Heart left ventricle (tissue), 16 donors: ENCODE measurements at regions of chr3 and their contacts with region 1.

Region 1: GRCh38 chr3:113211330-113212149 is at the start of gene BOC:
- DNase-seq: peak in 4 of 5 donors; percentile 41 to 49 (median 44)
- ATAC-seq: peak; percentile 68 to 89 (median 82)
- H3K4me3 ChIP-seq: peak within 1 kb of the TSS; percentile 49 to 93 (median 72)
- H3K27ac ChIP-seq: peak within 1 kb of the TSS; percentile 74 to 97 (median 86)
- H3K4me1 ChIP-seq: peaks cover 0 to 18% (median 0%) of the 10 kb centered on the region in 12 donors
- H3K27me3 ChIP-seq: peaks cover 0 to 42% (median 6%) of the 10 kb centered on the region in 9 donors
- CTCF ChIP-seq: no peak
- POLR2A ChIP-seq: peak in 1 of 2 donors; percentile 40
- total RNA-seq, gene BOC: 3.1 to 12.2 (median 6.0) TPM

Region 2: GRCh38 chr3:113151461-113152031 is 60.0 kb before region 1 on chr3:
- intact Hi-C with region 1: loop called in 1 of 10 experiments (anchors 5 kb)
- DNase-seq: no peak
- ATAC-seq: peak in 3 of 4 donors; percentile 39 to 70 (median 59)
- H3K4me3 ChIP-seq: no peak overlapping the region
- H3K27ac ChIP-seq: peak overlapping the region in 10 of 12 donors; percentile 2 to 81 (median 56)
- H3K4me1 ChIP-seq: peaks cover 0 to 46% (median 7%) of the 10 kb centered on the region in 12 donors
- H3K27me3 ChIP-seq: no peaks in the 10 kb centered on the region
- CTCF ChIP-seq: no peak
- POLR2A ChIP-seq: no peak

Region 3: DNA sequence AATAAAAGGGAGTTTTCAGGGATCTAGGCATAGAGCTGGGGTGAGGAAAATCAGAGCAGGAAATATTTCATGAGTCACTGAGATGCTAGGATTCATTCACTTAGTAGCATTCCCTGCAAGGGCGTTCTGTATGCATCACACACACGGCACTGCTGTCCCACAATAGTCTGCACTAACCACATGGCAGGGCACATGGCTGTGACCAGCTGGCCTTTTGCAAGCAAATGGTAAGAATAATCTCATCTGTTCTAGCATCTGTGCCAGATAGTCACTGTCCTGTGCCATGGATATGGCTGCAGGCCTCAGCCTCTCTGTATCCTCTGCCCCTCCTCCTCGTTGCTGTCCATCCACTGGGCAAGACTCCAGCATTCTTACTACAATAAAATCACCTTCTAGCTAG is 37.6 kb after region 1 on chr3:
- intact Hi-C with region 1: loop called in 1 of 10 experiments (anchors 5 kb)
- DNase-seq: peak in 1 of 5 donors; percentile 41
- ATAC-seq: peak in 3 of 4 donors; percentile 36 to 68 (median 59)
- H3K4me3 ChIP-seq: no peak overlapping the region
- H3K27ac ChIP-seq: peak overlapping the region in 5 of 12 donors; percentile 18 to 83 (median 76)
- H3K4me1 ChIP-seq: peaks cover 0 to 48% (median 11%) of the 10 kb centered on the region in 12 donors
- H3K27me3 ChIP-seq: peaks cover 0 to 3% (median 0%) of the 10 kb centered on the region in 9 donors
- CTCF ChIP-seq: no peak
- POLR2A ChIP-seq: no peak

Region 4: GRCh38 chr3:113275929-113276750 is 64.6 kb after region 1 on chr3:
- intact Hi-C with region 1: loop called in 3 of 10 experiments (anchors 5 to 10 kb)
- DNase-seq: peak in 1 of 5 donors; percentile 58
- ATAC-seq: peak in 3 of 4 donors; percentile 49 to 78 (median 76)
- H3K4me3 ChIP-seq: peak overlapping the region in 9 of 12 donors; percentile 2 to 43 (median 35)
- H3K27ac ChIP-seq: peak overlapping the region; percentile 18 to 86 (median 74)
- H3K4me1 ChIP-seq: peaks cover 0 to 27% (median 5%) of the 10 kb centered on the region in 12 donors
- H3K27me3 ChIP-seq: no peaks in the 10 kb centered on the region
- CTCF ChIP-seq: peak in 2 of 12 donors; percentile 6 to 16
- POLR2A ChIP-seq: no peak

Region 5: GRCh38 chr3:113287803-113288648 is 76.5 kb after region 1 on chr3:
- intact Hi-C with region 1: loop called in 2 of 10 experiments (anchors 5 to 10 kb)
- DNase-seq: peak in 2 of 5 donors; percentile 45
- ATAC-seq: peak in 3 of 4 donors; percentile 41 to 55 (median 43)
- H3K4me3 ChIP-seq: no peak overlapping the region
- H3K27ac ChIP-seq: peak overlapping the region in 1 of 12 donors; percentile 51
- H3K4me1 ChIP-seq: peaks cover 0 to 8% (median 0%) of the 10 kb centered on the region in 12 donors
- H3K27me3 ChIP-seq: no peaks in the 10 kb centered on the region
- CTCF ChIP-seq: peak; percentile 91 to 100 (median 98)
- POLR2A ChIP-seq: no peak

Region 6: GRCh38 chr3:113535898-113536297 is 324.4 kb after region 1 on chr3:
- intact Hi-C with region 1: no loop called
- DNase-seq: no peak
- ATAC-seq: no peak
- H3K4me3 ChIP-seq: no peak overlapping the region
- H3K27ac ChIP-seq: no peak overlapping the region
- H3K4me1 ChIP-seq: peaks cover 0 to 21% (median 6%) of the 10 kb centered on the region in 12 donors
- H3K27me3 ChIP-seq: peaks cover 0 to 50% (median 20%) of the 10 kb centered on the region in 9 donors
- CTCF ChIP-seq: no peak
- POLR2A ChIP-seq: no peak